Breast epithelium (tissue), 4 donors: ENCODE measurements at regions of chr19 and their contacts with region 1.

Region 1: DNA sequence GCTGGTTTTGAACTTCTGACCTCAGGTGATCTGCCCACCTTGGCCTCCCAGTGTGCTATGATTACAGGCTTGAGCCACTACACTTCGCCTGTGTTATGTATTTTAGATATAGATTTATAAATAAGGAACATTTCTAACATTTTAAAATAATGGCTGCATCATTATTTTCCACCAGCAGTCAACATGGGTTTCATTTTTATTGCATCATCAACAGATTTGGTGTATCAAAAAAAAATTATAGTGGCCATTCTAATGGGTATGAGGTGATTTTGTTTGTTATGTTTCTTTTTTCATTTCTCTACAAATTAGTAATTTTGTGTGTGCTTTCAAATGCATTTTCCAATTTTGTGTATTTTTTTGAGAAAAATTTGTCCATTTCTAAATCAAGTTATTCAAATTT is 16.2 kb upstream of the ZNF93 start:
- DNase-seq: no peak
- H3K4me3 ChIP-seq: no peak overlapping the region
- H3K27ac ChIP-seq: no peak overlapping the region
- H3K4me1 ChIP-seq: no peaks in the 10 kb centered on the region
- H3K27me3 ChIP-seq: no peaks in the 10 kb centered on the region
- CTCF ChIP-seq: no peak
- POLR2A ChIP-seq: no peak

Region 2: DNA sequence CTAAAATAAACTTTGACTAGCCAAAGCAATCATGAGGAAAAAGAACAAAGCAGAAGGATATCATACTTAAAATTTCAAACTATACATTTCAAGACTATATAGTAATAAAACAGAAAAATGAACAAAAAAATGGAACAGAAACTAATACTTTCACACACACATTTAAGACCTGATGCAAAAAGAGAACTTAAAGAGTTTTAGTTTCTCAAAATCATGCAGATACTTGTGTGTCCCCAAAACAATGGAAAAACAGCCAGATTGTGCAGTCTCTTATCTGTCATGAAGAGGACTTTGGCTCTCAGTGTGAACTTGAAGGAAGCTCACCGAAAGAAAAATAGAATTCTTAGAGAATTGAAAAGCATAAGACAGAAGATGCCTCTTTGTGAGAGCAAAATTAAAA is 79.1 kb before region 1 on chr19:
- intact Hi-C with region 1: no loop called
- DNase-seq: no peak
- H3K4me3 ChIP-seq: no peak overlapping the region
- H3K27ac ChIP-seq: no peak overlapping the region
- H3K4me1 ChIP-seq: no peaks in the 10 kb centered on the region
- H3K27me3 ChIP-seq: no peaks in the 10 kb centered on the region
- CTCF ChIP-seq: no peak
- POLR2A ChIP-seq: no peak

Region 3: DNA sequence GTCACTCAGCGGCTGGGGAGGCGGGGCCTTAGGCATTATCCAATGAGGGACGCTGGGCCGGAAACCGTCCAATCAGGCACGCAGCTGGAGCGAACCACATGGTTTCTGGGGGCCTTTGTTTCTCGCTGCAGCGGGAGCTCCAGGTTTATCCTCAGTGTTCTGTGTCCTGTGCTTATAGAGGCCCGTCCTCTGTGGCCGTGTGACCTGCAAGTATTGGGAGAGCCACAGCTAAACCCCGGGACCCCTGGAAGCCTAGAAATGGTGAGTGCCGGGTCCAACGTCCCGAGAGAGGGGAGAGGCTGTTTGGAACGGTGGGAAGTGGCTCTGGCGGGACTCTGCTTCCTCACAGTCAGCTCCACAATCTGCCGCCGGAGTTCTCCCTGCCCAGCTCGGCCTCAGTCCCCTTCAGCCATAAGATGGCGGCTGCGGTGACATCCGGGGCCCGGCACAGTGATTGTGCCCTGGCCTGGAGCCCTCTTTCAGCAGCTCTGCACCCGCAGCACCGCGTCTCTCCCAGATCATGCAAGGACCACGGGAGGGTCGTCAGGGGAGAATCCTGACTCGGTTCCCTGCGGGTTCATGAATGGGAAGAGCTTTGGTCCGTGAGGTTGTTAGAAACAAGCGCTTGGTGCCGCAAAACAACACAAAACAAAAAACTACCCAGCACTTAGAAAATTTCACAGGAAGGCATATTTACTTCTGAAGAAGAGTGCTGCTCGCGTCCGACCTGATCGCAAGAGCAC is 18.7 kb before region 1 on chr19 and contains the start of gene ZNF253:
- intact Hi-C with region 1: loop called (anchors 2 kb)
- DNase-seq: peak; percentile 98
- H3K4me3 ChIP-seq: peak within 1 kb of the TSS; percentile 69 to 83 (median 75)
- H3K27ac ChIP-seq: peak within 1 kb of the TSS; percentile 94
- H3K4me1 ChIP-seq: peaks cover 0 to 8% of the 10 kb centered on the region in 2 donors
- H3K27me3 ChIP-seq: no peaks in the 10 kb centered on the region
- CTCF ChIP-seq: no peak
- POLR2A ChIP-seq: peak; percentile 84
- total RNA-seq, gene ZNF253: 6.4 to 25.6 (median 12.8) TPM